Activated CD4-positive, alpha-beta T cell treated with anti-CD3 and anti-CD28 coated beads for 36 hours (primary cell): ENCODE measurements at regions of chr3 and their contacts with region 1.

Region 1: GRCh38 chr3:45387636-45388348 is 584 bp upstream of the LARS2 start:
- DNase-seq: no peak
- ATAC-seq: peak; percentile 8
- H3K4me3 Mint-ChIP-seq: peak overlapping the region; percentile 85
- H3K27ac Mint-ChIP-seq: peak overlapping the region; percentile 51
- H3K4me1 Mint-ChIP-seq: peaks cover 13% of the 10 kb centered on the region
- H3K27me3 Mint-ChIP-seq: peaks cover 1% of the 10 kb centered on the region

Region 2: GRCh38 chr3:45455040-45455439 is 67.2 kb after region 1 on chr3:
- CTCF ChIA-PET with region 1: no interaction called
- POLR2A ChIA-PET with region 1: no interaction called
- intact Hi-C with region 1: no loop called
- DNase-seq: no peak
- ATAC-seq: no peak
- H3K4me3 Mint-ChIP-seq: no peak overlapping the region
- H3K27ac Mint-ChIP-seq: no peak overlapping the region
- H3K4me1 Mint-ChIP-seq: no peaks in the 10 kb centered on the region
- H3K27me3 Mint-ChIP-seq: no peaks in the 10 kb centered on the region

Region 3: GRCh38 chr3:45841757-45842491 is 454.1 kb after region 1 on chr3 and contains the start of gene LZTFL1:
- CTCF ChIA-PET with region 1: no interaction called
- POLR2A ChIA-PET with region 1: no interaction called
- intact Hi-C with region 1: loop called in 1 of 2 experiments (anchors 1 kb)
- DNase-seq: peak; percentile 94
- ATAC-seq: peak; percentile 89
- H3K4me3 Mint-ChIP-seq: peak within 1 kb of the TSS; percentile 87
- H3K27ac Mint-ChIP-seq: peak within 1 kb of the TSS; percentile 82
- H3K4me1 Mint-ChIP-seq: peaks cover 14% of the 10 kb centered on the region
- H3K27me3 Mint-ChIP-seq: no peaks in the 10 kb centered on the region
- total RNA-seq, gene LZTFL1: 4.5 to 6.6 TPM